Psoas muscle (tissue), 8 donors: ENCODE measurements at regions of chr12 and their contacts with region 1.

Region 1: DNA sequence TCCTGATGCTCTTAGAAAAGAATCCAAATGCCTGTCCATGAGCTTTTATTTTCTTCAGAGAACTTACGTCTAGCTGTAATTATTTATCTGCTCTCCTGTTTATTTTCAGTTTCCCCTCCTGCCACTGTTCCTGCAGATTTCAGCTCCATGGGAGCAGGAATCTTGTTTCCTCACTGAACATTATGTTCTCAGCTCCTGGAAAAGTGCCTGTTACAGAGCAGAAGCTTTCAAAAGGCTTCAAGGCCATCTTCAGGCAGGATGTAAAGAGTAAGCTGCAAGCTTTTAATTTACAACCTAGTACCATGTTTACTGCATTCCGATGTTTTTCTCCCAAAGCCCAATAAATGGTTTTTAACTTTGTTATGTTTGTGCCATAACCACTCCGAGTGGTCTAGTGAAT is 98.4 kb upstream of the BTG1 start:
- DNase-seq: no peak
- ATAC-seq: peak in 3 of 4 donors; percentile 27 to 68 (median 38)
- H3K4me3 ChIP-seq: no peak overlapping the region
- H3K27ac ChIP-seq: no peak overlapping the region
- H3K4me1 ChIP-seq: peaks cover 9% of the 10 kb centered on the region
- H3K27me3 ChIP-seq: no peaks in the 10 kb centered on the region
- CTCF ChIP-seq: no peak

Region 2: GRCh38 chr12:91804533-91804932 is 439.5 kb before region 1 on chr12:
- intact Hi-C with region 1: loop called in 1 of 2 experiments (anchors 10 kb)
- DNase-seq: no peak
- ATAC-seq: no peak
- H3K4me3 ChIP-seq: no peak overlapping the region
- H3K27ac ChIP-seq: no peak overlapping the region
- H3K4me1 ChIP-seq: no peaks in the 10 kb centered on the region
- H3K27me3 ChIP-seq: no peaks in the 10 kb centered on the region
- CTCF ChIP-seq: no peak

Region 3: GRCh38 chr12:92561543-92561899 is 317.5 kb after region 1 on chr12:
- intact Hi-C with region 1: loop called in 1 of 2 experiments (anchors 10 kb)
- DNase-seq: no peak
- ATAC-seq: peak; percentile 60 to 71 (median 65)
- H3K4me3 ChIP-seq: no peak overlapping the region
- H3K27ac ChIP-seq: peak overlapping the region; percentile 23
- H3K4me1 ChIP-seq: peaks cover 4% of the 10 kb centered on the region
- H3K27me3 ChIP-seq: no peaks in the 10 kb centered on the region
- CTCF ChIP-seq: no peak